Colonic mucosa (tissue), 4 donors: ENCODE measurements at regions of chr3 and their contacts with region 1.

Region 1: GRCh38 chr3:150238998-150239619 is 169.0 kb upstream of the TSC22D2 start:
- DNase-seq: peak; percentile 54
- H3K4me3 ChIP-seq: no peak overlapping the region
- H3K27ac ChIP-seq: no peak overlapping the region
- H3K4me1 ChIP-seq: no peaks in the 10 kb centered on the region
- H3K27me3 ChIP-seq: no peaks in the 10 kb centered on the region
- CTCF ChIP-seq: peak; percentile 36

Region 2: GRCh38 chr3:149480325-149481017 is 758.6 kb before region 1 on chr3:
- intact Hi-C with region 1: no loop called
- DNase-seq: peak; percentile 86
- H3K4me3 ChIP-seq: no peak overlapping the region
- H3K27ac ChIP-seq: no peak overlapping the region
- H3K4me1 ChIP-seq: no peaks in the 10 kb centered on the region
- H3K27me3 ChIP-seq: no peaks in the 10 kb centered on the region
- CTCF ChIP-seq: peak; percentile 86

Region 3: GRCh38 chr3:150005243-150006112 is 233.6 kb before region 1 on chr3:
- intact Hi-C with region 1: no loop called
- DNase-seq: no peak
- H3K4me3 ChIP-seq: no peak overlapping the region
- H3K27ac ChIP-seq: no peak overlapping the region
- H3K4me1 ChIP-seq: no peaks in the 10 kb centered on the region
- H3K27me3 ChIP-seq: no peaks in the 10 kb centered on the region
- CTCF ChIP-seq: no peak

Region 4: GRCh38 chr3:150114873-150115540 is 124.1 kb before region 1 on chr3:
- intact Hi-C with region 1: no loop called
- DNase-seq: no peak
- H3K4me3 ChIP-seq: no peak overlapping the region
- H3K27ac ChIP-seq: no peak overlapping the region
- H3K4me1 ChIP-seq: no peaks in the 10 kb centered on the region
- H3K27me3 ChIP-seq: no peaks in the 10 kb centered on the region
- CTCF ChIP-seq: no peak

Region 5: DNA sequence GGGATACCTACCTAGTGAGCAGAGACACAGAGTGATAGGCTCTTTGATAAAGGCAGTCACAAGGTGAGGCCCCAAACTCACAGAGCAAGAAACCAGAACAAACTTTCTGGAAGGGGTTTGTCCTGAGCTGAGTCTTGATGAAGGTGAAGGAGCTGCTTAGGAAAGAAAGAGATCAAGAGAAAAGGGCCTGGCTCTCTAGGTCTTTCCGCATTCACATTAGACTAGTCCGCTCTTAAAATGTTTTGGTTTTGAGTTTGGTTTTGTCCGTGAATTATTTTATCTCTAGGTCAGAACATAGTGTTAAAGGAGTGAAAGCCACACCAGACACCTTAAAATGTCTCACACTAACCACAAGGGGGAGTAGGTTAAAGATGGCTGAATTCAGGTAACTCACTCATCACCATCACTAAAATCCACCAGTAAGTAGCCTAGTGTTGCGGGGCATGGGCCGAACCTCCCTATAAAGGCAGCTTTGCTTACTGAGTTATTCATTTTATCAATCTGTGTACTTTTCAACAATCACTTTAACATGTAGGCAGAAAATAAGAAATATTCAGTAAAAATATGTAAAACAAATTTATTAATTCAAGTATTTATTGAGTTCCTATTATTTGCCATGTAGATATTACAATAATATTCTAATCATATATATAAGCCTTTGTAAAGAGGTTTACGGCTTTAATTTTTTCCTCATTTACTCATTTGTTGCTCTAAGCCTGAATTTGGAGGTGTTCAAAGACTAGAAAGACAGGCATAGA is 47.5 kb after region 1 on chr3:
- intact Hi-C with region 1: loop called (anchors 10 kb)
- DNase-seq: no peak
- H3K4me3 ChIP-seq: no peak overlapping the region
- H3K27ac ChIP-seq: no peak overlapping the region
- H3K4me1 ChIP-seq: no peaks in the 10 kb centered on the region
- H3K27me3 ChIP-seq: no peaks in the 10 kb centered on the region
- CTCF ChIP-seq: peak; percentile 60

Region 6: GRCh38 chr3:150408221-150409102 is 169.4 kb after region 1 on chr3 and contains the start of gene TSC22D2:
- intact Hi-C with region 1: loop called (anchors 5 kb)
- DNase-seq: peak; percentile 98
- H3K4me3 ChIP-seq: peak within 1 kb of the TSS; percentile 97
- H3K27ac ChIP-seq: peak within 1 kb of the TSS; percentile 100
- H3K4me1 ChIP-seq: no peaks in the 10 kb centered on the region
- H3K27me3 ChIP-seq: no peaks in the 10 kb centered on the region
- CTCF ChIP-seq: no peak
- total RNA-seq, gene TSC22D2: 16.7 to 31.7 TPM